ENCODE measurements at regions of chr1 and their contacts with region 1.

Region 1: DNA sequence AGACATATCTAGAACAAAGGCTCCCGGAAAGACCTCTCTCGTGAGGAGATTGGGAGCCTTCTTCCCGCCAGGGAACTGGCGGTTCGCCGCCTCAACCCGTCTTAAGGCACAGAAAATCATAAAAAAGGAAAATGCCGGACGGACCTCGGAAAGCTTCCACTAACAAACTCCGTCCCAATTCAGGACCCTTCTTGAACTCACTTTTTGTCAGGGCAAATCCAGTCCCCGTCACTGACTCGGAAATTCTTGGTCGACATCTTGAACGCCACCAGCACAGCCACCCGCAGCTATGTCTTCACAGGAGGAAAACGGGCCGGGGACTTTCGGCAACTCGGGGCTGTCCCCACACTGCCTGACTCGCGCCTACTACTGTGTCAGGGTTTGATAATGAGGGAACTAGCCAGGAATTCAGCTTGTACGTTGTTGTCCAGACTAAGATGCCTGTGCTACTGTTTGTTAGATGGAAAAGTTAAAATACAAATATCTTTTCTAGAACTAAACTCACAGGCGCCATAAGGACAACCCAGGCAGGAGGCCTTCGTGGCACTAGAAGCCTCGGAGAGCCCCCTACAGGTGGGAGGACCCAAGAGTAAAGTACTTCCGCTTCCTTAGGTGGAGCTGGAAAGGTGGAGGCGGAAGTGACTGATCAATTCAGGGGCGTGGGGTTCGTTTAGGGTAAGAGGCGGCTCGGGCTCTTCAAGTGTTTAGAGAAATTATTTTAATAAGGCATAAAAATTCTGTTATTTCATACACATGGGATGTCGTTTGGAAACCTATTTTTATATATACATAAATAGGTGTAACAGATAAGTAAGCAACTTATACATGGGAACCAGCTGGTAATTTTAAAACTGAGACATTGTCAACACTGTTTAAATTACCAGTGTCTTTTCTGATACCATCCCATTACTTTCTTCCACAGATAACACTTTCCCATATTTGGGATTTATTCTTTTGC is at the start of gene ZRANB2:
- DNase-seq: peak; percentile 52 to 94
- H3K4me3 ChIP-seq: peak within 1 kb of the TSS; percentile 81 to 83
- H3K27ac ChIP-seq: peak within 1 kb of the TSS; percentile 77 to 88
- H3K4me1 ChIP-seq: peaks cover 9 to 22% of the 10 kb centered on the region in 2 donors
- H3K27me3 ChIP-seq: no peaks in the 10 kb centered on the region
- CTCF ChIP-seq: peak; percentile 35 to 75 (median 42)
- total RNA-seq, gene ZRANB2: 37.9 TPM

Region 2: GRCh38 chr1:70205434-70206118 is 875.4 kb before region 1 on chr1 and contains the start of gene LRRC40:
- intact Hi-C with region 1: loop called (anchors 1 kb)
- DNase-seq: peak; percentile 88 to 97
- H3K4me3 ChIP-seq: peak within 1 kb of the TSS; percentile 72 to 82
- H3K27ac ChIP-seq: peak within 1 kb of the TSS; percentile 85 to 94
- H3K4me1 ChIP-seq: peaks cover 0 to 28% of the 10 kb centered on the region in 2 donors
- H3K27me3 ChIP-seq: no peaks in the 10 kb centered on the region
- CTCF ChIP-seq: no peak
- total RNA-seq, gene LRRC40: 10.6 TPM

Region 3: DNA sequence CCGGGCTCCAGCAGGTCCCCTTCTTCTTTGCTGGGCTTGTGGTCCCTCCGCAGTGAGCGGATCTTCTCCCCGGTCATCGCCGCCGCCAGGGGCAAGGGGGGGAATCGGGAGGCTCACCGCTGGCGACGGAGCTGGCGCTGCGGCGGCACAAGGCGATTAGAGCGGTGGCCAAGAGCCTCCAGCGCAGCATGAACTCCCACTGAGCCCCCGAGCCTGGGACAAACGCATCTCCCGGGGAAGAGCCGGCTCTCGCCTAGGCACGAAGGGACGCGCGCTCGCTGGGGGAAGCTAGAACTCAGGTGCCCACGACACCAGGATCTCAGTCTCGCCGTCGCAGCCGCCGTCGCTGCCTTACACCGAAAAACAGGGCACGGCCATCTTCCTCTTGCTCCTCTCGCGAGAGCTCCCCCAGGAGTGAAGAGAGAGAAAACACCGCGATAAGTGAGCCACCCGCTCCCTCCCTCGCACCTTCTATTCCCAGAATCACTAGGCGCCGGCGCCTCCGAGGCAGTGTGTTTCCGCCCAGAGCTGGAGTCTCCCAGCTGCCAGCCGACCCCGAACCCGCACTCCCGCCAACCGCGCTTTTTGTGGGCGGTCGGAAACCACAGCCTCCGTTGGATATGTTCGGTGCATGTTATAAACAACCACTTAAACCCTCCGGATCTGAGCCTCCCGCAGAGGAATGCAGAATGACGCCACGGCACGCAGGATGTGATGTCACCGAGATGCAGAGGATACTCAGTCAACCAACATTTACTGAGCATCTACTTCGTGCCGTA is 726.5 kb before region 1 on chr1 and contains the start of gene ANKRD13C:
- intact Hi-C with region 1: loop called (anchors 5 kb)
- DNase-seq: peak; percentile 86 to 98
- H3K4me3 ChIP-seq: peak within 1 kb of the TSS; percentile 82 to 92
- H3K27ac ChIP-seq: peak within 1 kb of the TSS; percentile 91 to 96
- H3K4me1 ChIP-seq: peaks cover 3 to 34% of the 10 kb centered on the region in 2 donors
- H3K27me3 ChIP-seq: no peaks in the 10 kb centered on the region
- CTCF ChIP-seq: no peak
- total RNA-seq, gene ANKRD13C: 30.2 TPM

Region 4: GRCh38 chr1:70410604-70411359 is 670.2 kb before region 1 on chr1 and contains the start of gene CTH:
- intact Hi-C with region 1: loop called (anchors 1 kb)
- DNase-seq: peak; percentile 91 to 98
- H3K4me3 ChIP-seq: peak within 1 kb of the TSS; percentile 73 to 91
- H3K27ac ChIP-seq: peak within 1 kb of the TSS; percentile 93 to 96
- H3K4me1 ChIP-seq: peaks cover 0 to 7% of the 10 kb centered on the region in 2 donors
- H3K27me3 ChIP-seq: no peaks in the 10 kb centered on the region
- CTCF ChIP-seq: no peak
- total RNA-seq, gene CTH: 4.3 TPM

Region 5: GRCh38 chr1:71046891-71047634 is 34.0 kb before region 1 on chr1:
- intact Hi-C with region 1: no loop called
- DNase-seq: peak in 1 of 2 donors; percentile 69
- H3K4me3 ChIP-seq: peak overlapping the region; percentile 74 to 86
- H3K27ac ChIP-seq: peak overlapping the region; percentile 71 to 85
- H3K4me1 ChIP-seq: peaks cover 0 to 7% of the 10 kb centered on the region in 2 donors
- H3K27me3 ChIP-seq: no peaks in the 10 kb centered on the region
- CTCF ChIP-seq: no peak